ENCODE measurements at regions of chr19 and their contacts with region 1.

Region 1: GRCh38 chr19:19053508-19054314 is 10.1 kb upstream of the SLC25A42 start:
- H3K4me3 ChIP-seq: no peak overlapping the region
- H3K27ac ChIP-seq: no peak overlapping the region
- H3K4me1 ChIP-seq: no peaks in the 10 kb centered on the region
- CTCF ChIP-seq: 0 out of 2 replicates have a peak, but pooled peaks have one; percentile 41

Region 2: DNA sequence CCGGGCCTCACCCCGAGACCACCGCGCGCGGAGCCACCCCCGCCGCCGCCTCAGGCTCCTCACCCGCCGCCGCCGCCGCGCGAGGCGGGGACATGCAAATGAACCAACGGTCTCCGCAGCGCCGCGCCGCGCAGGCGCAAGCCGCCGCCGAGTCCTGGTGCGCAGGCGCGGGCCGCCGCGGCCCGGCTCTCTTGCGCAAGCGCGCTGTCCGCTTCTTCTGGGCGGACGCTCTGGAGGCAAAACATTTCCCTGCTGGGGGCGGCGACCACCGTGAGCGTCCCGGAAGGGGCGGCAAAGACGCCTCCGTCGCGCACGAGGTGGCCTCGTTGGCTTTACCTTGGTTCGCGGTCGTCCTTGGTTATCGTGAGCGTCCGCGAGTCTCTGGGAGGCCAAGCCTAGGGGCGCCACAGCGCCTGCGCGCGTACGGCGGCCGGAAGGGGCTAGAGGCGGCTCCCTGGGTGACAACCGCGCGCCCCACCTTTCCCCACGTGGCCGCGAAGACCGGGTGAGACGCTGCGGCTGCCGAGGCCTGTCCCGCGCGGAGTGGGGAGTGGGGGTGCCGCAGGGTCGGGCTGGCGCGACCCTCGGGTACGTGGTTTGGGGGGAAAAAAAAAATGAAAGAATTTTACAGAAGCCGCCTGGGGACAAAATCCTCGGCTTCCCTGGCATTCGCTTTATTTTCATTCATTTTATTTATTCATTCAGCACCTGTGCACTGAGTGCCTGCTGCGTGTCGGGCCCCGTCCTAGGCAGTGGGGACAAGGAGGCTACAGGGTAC is 20.1 kb before region 1 on chr19 and contains the starts of genes ARMC6 and SUGP2:
- CTCF ChIA-PET with region 1: interaction called, 11 read pairs
- POLR2A ChIA-PET with region 1: no interaction called
- H3K4me3 ChIP-seq: peak within 1 kb of the TSS; percentile 68
- H3K27ac ChIP-seq: peak within 1 kb of the TSS; percentile 94
- H3K4me1 ChIP-seq: no peaks in the 10 kb centered on the region
- CTCF ChIP-seq: peak; percentile 55; the same call in 1 of the 2 replicates

Region 3: DNA sequence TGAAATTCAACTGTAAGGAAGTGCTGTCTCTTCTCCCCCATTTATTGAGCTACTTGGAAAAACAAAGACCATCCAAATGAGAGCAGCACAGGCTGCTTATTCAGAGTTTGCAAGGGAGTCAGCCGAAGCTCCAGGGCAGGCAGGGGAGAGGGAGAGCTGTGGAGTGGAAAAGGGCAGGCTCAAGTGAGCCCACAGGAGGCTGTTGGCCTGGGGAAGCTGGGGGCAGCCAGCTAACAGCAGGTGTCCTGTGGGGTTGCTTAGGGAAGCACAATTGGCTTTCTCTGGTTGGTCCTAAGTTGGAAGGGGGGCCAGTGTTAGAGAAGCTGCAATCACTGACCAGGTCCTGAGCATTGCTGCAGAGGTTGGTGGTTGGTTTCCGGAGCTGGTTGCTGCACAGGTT is 34.0 kb after region 1 on chr19:
- CTCF ChIA-PET with region 1: no interaction called
- POLR2A ChIA-PET with region 1: no interaction called
- H3K4me3 ChIP-seq: no peak overlapping the region
- H3K27ac ChIP-seq: no peak overlapping the region
- H3K4me1 ChIP-seq: 0 out of 2 replicates have a peak, but pooled peaks cover 3% of the 10 kb centered on the region
- CTCF ChIP-seq: no peak

Region 4: GRCh38 chr19:19115954-19116353 is 62.2 kb after region 1 on chr19:
- CTCF ChIA-PET with region 1: interaction called, 12 read pairs
- POLR2A ChIA-PET with region 1: interaction called, 4 read pairs
- H3K4me3 ChIP-seq: no peak overlapping the region
- H3K27ac ChIP-seq: no peak overlapping the region
- H3K4me1 ChIP-seq: 0 out of 2 replicates have a peak, but pooled peaks cover 3% of the 10 kb centered on the region
- CTCF ChIP-seq: peak; percentile 40; the same call in 1 of the 2 replicates